Dorsolateral prefrontal cortex (tissue), 120 donors: ENCODE measurements at regions of chr7 and their contacts with region 1.

Region 1: DNA sequence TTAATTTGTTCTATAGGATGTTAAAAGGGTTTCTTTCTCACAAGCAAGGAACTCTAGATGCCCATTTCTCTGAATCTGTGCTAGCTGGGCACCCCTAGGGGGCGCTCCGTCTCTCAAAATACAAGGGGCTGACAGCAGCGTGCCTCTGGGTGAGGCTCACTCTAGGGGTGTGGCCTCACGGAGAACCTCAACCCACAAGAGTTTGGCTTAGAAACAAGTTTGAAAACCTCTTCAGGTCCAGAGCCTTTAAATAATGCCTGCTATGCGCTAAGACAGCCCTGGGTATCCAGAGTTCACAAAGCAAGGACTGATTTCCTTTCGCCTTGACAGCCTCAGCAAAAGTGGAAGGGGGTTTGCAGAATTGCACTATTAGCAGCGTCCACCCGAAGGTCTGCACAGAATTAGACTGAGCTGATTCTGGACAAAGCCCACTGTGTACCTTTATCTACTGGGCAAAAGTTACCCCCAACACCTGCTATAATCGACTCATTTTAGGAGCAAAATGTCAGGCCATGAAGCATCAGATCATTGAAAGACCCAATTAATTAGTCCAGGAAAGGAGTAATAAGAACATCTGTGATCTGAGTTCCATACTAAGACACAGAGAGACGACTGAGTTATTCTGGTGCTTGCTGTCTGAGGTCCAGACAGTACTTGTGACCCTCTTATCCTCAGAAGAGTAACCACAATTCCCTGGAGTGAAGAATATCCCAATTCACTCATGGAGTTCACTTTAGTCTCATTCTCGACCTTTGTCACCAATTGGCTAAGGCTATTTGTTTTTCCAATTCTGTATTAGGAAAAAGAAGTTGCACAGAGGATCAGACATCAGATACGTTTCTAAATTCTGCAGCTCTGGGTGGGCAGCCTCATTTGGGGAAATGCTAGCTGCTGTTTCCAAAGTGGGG is 574 bp upstream of the CPED1 start:
- DNase-seq: peak; percentile 67 to 81 (median 79)
- H3K4me3 ChIP-seq: peak overlapping the region; percentile 37 to 76 (median 60)
- H3K27ac ChIP-seq: peak overlapping the region in 49 of 59 donors; percentile 5 to 89 (median 64)
- H3K27me3 ChIP-seq: no peaks in the 10 kb centered on the region
- CTCF ChIP-seq: peak; percentile 70 to 99 (median 91)

Region 2: DNA sequence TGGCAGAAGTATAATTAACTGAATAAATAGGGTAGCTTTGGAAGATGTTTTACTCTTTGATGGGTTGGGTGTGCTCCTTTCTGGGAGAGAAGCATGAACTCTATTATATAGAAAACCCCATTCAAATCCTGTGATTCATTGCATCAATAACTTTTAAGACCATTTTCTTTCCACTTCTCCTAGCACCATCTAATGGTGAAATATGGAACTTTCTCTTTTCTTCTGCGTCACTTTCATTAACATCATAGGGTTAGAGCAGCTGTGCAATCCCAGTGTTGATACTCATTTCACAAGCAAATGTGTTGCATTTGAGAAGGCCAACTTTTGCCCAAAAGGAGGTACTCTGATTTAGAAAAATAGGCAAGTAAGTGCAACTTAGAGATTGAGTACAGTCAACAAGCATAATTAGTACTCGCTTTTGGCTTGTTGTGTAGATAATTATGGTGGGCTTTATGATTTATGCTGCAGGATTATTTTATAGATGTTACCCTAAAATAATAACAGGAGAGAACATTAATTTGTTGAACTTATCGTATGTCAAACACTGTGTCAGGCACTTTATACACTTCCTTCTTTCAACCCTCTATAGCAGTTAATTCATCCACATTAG is 93.5 kb after region 1 on chr7:
- intact Hi-C with region 1: loop called (anchors 2 to 5 kb)
- DNase-seq: no peak
- H3K4me3 ChIP-seq: no peak overlapping the region
- H3K27ac ChIP-seq: no peak overlapping the region
- H3K27me3 ChIP-seq: no peaks in the 10 kb centered on the region
- CTCF ChIP-seq: peak; percentile 56 to 92 (median 78)

Region 3: DNA sequence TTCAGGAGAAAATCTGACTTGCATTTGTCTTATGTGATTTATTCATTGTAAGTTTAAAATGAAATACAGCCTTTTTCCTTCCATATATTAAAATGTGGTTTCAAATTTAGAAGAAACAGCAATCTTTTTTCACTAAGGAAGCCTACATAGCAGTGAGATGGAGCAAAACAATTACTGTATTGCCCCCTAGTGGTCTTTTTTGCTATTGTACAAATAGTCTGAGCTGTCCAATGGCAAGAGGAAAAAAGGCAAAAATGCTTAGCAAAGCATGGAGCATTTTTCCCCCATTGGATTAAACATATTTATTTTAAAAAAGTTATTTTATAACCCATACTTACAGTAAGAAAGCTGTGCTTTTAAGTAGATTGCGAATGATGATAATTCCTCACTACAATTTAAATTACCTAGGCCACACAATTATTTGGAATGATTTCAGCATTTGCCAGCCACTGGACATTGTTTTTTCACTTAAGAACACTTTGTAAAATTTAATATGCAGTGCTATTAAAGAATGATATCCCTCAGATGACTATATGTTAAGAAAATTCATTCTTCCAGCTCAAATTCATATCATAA is 120.1 kb after region 1 on chr7:
- intact Hi-C with region 1: loop called in 1 of 2 experiments (anchors 2 kb)
- DNase-seq: no peak
- H3K4me3 ChIP-seq: no peak overlapping the region
- H3K27ac ChIP-seq: no peak overlapping the region
- H3K27me3 ChIP-seq: no peaks in the 10 kb centered on the region
- CTCF ChIP-seq: peak; percentile 63 to 92 (median 82)